ENCODE measurements at regions of chr2 and their contacts with region 1.

Region 1: GRCh38 chr2:176079831-176080539 is 3.8 kb downstream of the EVX2 start:
- DNase-seq: peak in 1 of 2 donors; percentile 50
- ATAC-seq: peak; percentile 67

Region 2: GRCh38 chr2:175518206-175518605 is 561.8 kb before region 1 on chr2:
- intact Hi-C with region 1: no loop called
- DNase-seq: no peak
- ATAC-seq: no peak

Region 3: DNA sequence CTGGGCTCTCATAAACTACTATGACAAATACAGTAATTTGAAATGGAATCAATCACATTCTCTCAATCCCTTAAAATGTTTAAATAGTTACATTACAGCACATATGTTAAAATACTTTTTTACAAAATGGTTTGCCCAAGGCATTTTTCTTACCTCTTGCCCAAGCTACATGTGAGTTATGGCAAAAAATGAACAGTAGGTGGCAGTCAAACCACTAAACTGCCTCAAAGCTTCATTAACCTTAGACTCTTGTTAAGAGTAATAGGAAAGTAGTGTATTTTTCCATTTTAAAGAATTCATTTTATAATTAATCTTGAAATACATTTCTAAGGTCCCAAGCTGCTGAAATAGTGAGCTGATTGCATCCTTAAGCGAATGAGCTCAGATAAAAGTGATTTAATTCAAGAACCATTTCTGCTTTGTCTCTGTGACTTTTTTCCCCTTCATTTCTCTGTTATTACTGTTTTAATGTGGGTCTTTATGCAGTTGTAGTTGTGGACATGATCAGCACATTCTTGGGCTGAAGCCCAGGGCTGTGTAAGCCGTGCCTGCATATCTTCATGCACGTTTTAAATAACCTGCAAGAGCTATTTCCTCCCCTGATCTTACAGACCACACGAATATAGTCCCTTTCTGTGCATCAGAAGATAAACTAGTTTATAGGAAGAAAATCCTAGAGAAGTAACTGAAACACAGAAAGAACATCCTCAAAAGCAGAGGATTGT is 389.7 kb before region 1 on chr2:
- intact Hi-C with region 1: loop called in 1 of 2 experiments (anchors 5 kb)
- DNase-seq: no peak
- ATAC-seq: peak; percentile 72

Region 4: DNA sequence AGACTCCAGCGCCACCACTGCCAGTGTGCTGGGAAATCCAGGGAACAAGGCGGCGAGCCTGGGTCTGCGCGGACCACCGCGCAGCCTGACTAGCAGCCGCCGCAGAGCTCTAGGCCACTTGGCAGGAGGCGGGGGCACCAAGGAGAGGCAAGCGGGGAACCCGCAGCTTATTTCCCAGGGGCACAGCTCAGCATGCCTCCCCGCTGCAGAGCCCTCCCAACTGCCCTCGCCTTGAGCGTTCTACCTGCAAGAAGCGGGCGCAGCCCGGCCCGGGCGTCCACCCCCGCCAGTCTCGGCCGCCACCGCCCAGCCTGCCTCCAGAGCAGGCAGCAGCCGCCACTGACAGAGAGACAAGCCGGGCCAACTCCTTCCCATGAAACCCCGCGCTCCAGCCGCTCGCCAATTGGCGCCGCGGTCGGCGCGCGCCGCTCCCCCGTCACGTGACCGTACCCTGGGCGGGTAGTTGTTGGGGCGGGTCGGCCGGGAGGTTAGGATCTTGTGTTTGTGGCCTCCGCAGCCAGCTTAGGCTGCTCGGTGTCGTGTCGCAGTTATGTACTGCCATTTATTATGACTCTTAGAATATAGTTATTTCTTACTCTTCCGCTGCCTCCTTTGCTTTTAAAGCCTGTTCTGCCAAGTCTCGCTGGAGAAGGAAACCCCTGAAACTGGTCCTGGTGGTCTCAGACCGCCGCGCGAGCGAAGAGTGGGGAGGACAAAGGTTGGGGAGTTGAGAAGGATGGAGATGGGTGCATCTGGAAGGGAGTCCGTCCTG is 77.9 kb before region 1 on chr2 and contains the start of gene LNPK:
- intact Hi-C with region 1: no loop called
- DNase-seq: peak; percentile 93 to 96
- ATAC-seq: peak; percentile 93
- total RNA-seq, gene LNPK: 41.5 to 41.9 TPM